Activated CD4-positive, alpha-beta T cell treated with anti-CD3 and anti-CD28 coated beads, Interleukin-2, amount 10 ng/mL, durations not matched to agents 24 days and 14 days (primary cell): ENCODE measurements at regions of chr2 and their contacts with region 1.

Region 1: GRCh38 chr2:181104512-181105115 is 124.2 kb downstream of the UBE2E3 start:
- DNase-seq: peak; percentile 79
- H3K4me3 Mint-ChIP-seq: peak overlapping the region; percentile 13
- H3K27ac Mint-ChIP-seq: peak overlapping the region; percentile 30
- H3K4me1 Mint-ChIP-seq: peaks cover 43% of the 10 kb centered on the region
- H3K27me3 Mint-ChIP-seq: no peaks in the 10 kb centered on the region

Region 2: GRCh38 chr2:181036848-181037603 is 67.6 kb before region 1 on chr2:
- intact Hi-C with region 1: no loop called
- DNase-seq: peak; percentile 65
- H3K4me3 Mint-ChIP-seq: peak overlapping the region; percentile 16
- H3K27ac Mint-ChIP-seq: peak overlapping the region; percentile 48
- H3K4me1 Mint-ChIP-seq: peaks cover 19% of the 10 kb centered on the region
- H3K27me3 Mint-ChIP-seq: no peaks in the 10 kb centered on the region

Region 3: DNA sequence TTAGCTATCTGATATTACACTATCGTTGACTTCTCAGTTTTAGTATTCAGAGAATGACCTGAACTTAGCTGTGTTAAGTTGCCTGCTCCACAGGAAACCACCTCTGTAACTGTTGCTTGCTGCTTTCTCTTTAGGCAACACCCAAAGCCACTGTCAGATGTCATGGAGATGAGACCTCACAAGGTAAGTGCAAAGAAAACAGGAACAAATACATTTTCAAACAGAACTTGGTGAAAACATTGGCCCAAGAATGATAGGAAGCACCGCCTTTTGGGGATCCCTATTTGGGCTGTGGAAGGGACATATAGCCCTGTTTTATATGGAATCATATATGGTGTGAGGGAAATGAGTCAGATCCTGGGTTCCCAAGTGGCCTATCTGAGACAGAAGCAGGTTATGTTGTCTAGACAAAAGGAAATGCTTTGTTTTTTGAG is 19.2 kb after region 1 on chr2:
- intact Hi-C with region 1: loop called (anchors 1 kb)
- DNase-seq: peak; percentile 93
- H3K4me3 Mint-ChIP-seq: peak overlapping the region; percentile 70
- H3K27ac Mint-ChIP-seq: peak overlapping the region; percentile 90
- H3K4me1 Mint-ChIP-seq: peaks cover 55% of the 10 kb centered on the region
- H3K27me3 Mint-ChIP-seq: no peaks in the 10 kb centered on the region

Region 4: DNA sequence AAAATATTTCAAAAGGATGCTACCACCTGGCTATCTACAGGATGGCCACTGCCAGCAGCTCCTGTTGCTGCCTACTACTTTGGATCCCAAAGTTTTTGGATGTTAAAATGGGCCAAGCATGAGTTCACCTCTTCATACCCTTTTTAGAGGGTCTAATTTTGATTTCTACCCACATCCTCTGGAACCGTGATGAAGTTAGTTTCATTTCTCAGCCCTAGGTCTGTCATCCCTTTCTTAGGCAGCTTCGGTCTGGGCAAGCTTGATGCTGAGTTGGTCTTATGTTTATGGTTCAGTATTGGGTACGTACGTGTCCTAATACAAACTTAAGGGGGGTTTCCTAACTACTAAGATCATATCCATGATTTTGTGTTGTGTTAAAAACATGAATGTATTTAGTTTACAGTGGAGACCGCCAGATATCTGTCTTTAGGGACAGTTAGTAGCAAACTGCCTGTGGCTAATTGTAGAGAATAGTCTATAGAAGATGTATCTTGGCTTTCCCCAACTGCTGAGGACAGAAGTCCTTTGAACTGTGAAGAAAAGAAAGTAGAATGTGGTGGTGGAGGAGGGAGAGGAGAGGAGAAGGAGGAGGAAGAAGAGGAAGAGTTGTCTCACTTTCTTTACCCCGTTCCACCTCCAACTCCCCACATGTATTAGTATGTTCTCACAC is 60.7 kb after region 1 on chr2:
- intact Hi-C with region 1: loop called (anchors 2 kb)
- DNase-seq: peak; percentile 81
- H3K4me3 Mint-ChIP-seq: peak overlapping the region; percentile 58
- H3K27ac Mint-ChIP-seq: peak overlapping the region; percentile 93
- H3K4me1 Mint-ChIP-seq: peaks cover 36% of the 10 kb centered on the region
- H3K27me3 Mint-ChIP-seq: no peaks in the 10 kb centered on the region

Region 5: GRCh38 chr2:181223234-181223633 is 118.6 kb after region 1 on chr2:
- intact Hi-C with region 1: loop called (anchors 1 kb)
- DNase-seq: peak; percentile 59
- H3K4me3 Mint-ChIP-seq: peak overlapping the region; percentile 71
- H3K27ac Mint-ChIP-seq: peak overlapping the region; percentile 96
- H3K4me1 Mint-ChIP-seq: peaks cover 29% of the 10 kb centered on the region
- H3K27me3 Mint-ChIP-seq: no peaks in the 10 kb centered on the region

Region 6: DNA sequence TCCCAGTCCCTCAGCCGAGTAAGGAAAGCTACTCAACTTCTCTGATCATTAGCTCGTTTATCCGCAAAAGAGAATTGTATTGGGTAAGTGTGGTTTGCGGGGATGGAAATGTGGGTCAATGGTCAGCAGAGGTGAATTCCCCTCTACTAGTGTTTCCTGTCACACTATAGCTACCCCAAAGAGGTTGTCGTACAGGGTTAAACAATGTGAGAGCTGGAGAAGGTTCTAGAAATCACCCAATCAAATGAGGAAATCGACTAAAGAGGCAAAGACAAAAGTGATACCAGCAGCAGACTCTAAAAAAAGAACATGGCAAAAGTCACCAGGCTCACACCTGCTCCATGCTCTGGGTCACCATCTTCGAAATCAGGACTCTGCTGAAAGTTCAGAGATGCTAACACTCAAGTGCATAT is 207.9 kb after region 1 on chr2:
- intact Hi-C with region 1: loop called (anchors 1 kb)
- DNase-seq: peak; percentile 84
- H3K4me3 Mint-ChIP-seq: peak overlapping the region; percentile 83
- H3K27ac Mint-ChIP-seq: peak overlapping the region; percentile 98
- H3K4me1 Mint-ChIP-seq: peaks cover 40% of the 10 kb centered on the region
- H3K27me3 Mint-ChIP-seq: no peaks in the 10 kb centered on the region

Region 7: DNA sequence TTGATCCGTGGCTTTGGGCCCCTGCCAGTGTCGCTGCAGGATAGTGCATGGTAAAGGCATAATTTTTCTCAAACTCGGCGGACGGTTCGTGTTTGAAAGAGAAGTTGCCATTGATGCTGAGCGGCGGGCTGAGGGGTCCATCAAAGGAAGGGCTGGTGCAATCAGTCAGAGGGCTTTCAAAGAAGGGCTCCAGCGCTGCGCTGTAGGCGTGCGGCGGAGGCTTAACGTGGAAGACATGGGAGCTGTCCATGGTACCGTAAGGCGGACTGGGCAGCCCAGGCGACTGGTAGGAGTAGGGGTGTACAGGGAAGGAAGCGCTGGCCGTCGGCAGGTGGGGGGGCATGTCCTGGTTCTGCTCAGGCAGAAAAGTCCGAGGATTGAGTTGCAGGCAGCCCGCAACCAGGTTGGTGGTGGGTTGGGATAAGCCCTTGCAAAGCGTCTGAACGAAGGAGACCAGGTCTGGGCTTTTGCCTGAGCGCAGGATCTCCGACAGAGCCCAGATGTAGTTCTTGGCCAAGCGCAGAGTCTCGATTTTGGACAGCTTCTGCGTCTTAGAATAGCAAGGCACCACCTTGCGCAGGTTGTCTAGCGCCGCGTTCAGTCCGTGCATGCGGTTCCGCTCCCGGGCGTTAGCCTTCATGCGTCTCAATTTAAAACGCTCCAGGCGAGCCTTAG is 573.4 kb after region 1 on chr2:
- intact Hi-C with region 1: loop called (anchors 5 kb)
- DNase-seq: peak; percentile 92
- H3K4me3 Mint-ChIP-seq: no peak overlapping the region
- H3K27ac Mint-ChIP-seq: peak overlapping the region; percentile 82
- H3K4me1 Mint-ChIP-seq: peaks cover 30% of the 10 kb centered on the region
- H3K27me3 Mint-ChIP-seq: peaks cover 75% of the 10 kb centered on the region